Ascending aorta (tissue), 2 donors: ENCODE measurements at regions of chr7 and their contacts with region 1.

Region 1: DNA sequence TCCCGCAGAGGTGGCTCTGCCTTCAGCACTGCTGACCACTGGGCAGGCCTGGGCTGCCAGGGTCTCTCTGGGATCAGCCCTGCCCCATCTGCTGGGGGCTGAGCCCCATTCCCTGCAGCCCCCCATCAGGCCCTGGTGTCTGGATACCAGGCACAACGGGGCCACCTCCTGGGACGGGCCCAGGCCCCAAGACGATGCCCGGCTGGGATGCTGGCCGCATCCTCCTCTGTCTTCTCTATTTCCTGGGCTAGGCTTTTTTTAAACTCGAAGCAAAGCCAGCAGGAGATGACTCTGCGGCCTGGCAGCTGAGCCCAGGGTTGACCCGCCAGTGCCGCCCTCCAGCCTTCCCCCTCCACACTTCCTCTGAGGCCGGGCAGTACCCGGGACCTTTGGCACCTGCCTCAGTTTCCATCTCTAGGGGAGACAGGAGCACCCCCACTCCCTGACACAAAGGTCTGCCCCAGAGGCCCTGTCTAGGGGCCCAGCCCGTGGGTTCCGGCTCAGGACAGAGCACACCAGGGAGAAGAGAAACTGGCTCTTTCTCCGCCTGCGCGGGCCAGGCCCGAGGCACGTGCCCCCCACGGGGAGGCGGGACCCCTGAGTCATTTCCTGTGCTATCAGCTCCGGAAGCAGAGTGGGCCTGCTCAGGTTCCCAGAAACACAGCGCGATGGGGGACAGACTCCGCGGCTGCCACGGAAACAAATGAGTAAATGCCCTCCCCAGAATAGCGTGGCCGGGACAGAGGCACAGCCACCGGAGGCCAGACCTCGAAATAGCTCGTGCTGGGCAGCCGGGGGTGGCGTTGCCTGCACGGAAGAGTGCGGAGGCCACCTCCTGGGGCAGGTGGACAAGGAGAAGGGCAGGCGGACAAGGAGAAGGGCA is 84.6 kb upstream of the PDGFA start:
- DNase-seq: peak; percentile 94 to 98
- H3K4me3 ChIP-seq: peak overlapping the region in 1 of 2 donors; percentile 34
- H3K27ac ChIP-seq: peak overlapping the region; percentile 98 to 99
- H3K4me1 ChIP-seq: peaks cover 20 to 60% of the 10 kb centered on the region in 2 donors
- H3K27me3 ChIP-seq: no peaks in the 10 kb centered on the region
- CTCF ChIP-seq: peak in 2 of 3 experiments; percentile 26 to 62

Region 2: GRCh38 chr7:234655-235578 is 369.3 kb before region 1 on chr7:
- intact Hi-C with region 1: loop called (anchors 5 kb)
- DNase-seq: peak in 1 of 2 donors; percentile 83
- H3K4me3 ChIP-seq: peak overlapping the region in 1 of 2 donors; percentile 56
- H3K27ac ChIP-seq: peak overlapping the region; percentile 92 to 95
- H3K4me1 ChIP-seq: peaks cover 34 to 55% of the 10 kb centered on the region in 2 donors
- H3K27me3 ChIP-seq: no peaks in the 10 kb centered on the region
- CTCF ChIP-seq: no peak

Region 3: DNA sequence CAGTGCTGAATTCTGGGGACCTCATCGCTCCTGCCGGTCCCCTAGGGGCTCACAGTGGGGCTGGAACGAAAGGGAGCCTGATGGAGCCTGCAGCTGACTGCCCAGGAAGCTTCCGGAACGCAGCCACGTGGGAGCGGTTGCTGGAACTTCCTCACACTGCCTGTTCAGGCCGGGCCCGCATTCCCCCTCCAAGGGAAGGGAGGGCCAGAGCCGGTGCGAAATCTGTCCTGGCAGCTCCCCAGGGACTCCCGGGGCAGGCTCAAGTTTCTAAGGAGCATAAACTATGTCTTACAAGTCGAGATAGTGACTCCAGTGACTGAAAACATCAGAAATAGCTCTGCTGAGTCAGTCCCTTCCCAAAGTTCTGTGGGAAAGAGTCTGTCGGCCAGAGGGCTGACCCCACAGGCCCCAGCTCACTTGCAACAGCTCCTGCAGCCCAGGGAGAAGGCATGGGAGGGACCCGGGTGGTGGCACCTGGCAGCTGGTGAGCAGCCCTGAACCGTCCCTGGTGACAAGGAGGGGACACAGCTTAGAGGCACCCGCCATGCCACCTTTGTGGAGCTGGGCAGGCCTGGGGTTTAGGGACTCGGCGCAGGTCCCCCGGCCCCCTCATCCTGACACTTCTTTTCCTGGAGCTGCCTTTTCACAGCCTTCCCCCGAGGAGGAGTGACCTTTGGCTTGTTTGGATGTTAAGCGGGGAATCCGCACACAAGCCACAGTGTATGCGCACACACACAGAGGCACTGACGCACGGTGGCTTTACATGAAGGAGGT is 132.2 kb before region 1 on chr7:
- intact Hi-C with region 1: loop called (anchors 5 kb)
- DNase-seq: peak; percentile 88 to 97
- H3K4me3 ChIP-seq: peak overlapping the region in 1 of 2 donors; percentile 21
- H3K27ac ChIP-seq: peak overlapping the region; percentile 85
- H3K4me1 ChIP-seq: peaks cover 8 to 17% of the 10 kb centered on the region in 2 donors
- H3K27me3 ChIP-seq: no peaks in the 10 kb centered on the region
- CTCF ChIP-seq: no peak

Region 4: DNA sequence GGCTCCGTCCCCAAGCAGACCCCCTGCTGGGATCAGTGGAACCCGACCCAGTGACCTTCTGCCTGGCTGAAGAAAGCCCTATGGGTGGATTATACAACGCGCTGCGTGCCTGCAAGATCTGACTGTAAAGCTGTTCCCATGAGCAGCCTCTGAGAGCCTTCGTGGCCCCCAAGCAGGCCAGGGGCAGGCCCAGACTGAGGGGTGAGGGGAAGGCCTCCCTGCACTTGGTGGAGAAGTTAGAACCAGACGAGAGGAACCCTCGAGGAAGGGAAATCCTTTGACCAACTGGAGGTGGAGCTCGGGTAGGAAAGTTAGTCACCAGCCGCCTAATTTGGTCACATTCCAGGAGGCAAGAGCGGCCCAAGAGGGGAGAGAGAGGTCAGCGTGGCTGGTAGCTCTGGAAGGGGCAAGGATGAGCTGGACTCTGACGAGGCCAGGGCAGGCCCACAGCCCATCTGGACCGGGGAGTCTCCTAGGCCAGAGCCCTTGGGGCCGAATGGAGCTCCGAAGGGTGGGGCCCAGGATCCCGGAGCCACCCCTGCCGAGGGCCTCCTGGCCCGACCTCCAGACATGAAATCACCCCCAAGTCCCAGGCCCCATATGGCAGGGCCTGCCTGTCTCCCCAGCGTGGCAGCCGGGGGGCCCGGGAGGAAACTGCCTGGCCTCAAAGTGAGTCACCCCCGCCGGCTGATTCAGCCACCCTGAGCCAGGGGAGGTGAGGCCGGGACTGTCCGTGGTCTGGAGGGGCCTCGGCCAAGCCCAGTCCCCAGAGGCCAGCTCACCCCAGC is 61.3 kb before region 1 on chr7:
- intact Hi-C with region 1: loop called (anchors 1 kb)
- DNase-seq: peak; percentile 55 to 92
- H3K4me3 ChIP-seq: no peak overlapping the region
- H3K27ac ChIP-seq: peak overlapping the region; percentile 87 to 89
- H3K4me1 ChIP-seq: peaks cover 20 to 30% of the 10 kb centered on the region in 2 donors
- H3K27me3 ChIP-seq: no peaks in the 10 kb centered on the region
- CTCF ChIP-seq: no peak

Region 5: GRCh38 chr7:774161-775109 is 170.2 kb after region 1 on chr7:
- intact Hi-C with region 1: loop called (anchors 10 kb)
- DNase-seq: no peak
- H3K4me3 ChIP-seq: no peak overlapping the region
- H3K27ac ChIP-seq: no peak overlapping the region
- H3K4me1 ChIP-seq: peaks cover 6 to 20% of the 10 kb centered on the region in 2 donors
- H3K27me3 ChIP-seq: no peaks in the 10 kb centered on the region
- CTCF ChIP-seq: peak; percentile 90 to 96 (median 94)

Region 6: GRCh38 chr7:1532483-1533424 is 928.5 kb after region 1 on chr7:
- intact Hi-C with region 1: loop called (anchors 10 kb)
- DNase-seq: peak; percentile 88 to 96
- H3K4me3 ChIP-seq: peak overlapping the region; percentile 76 to 91
- H3K27ac ChIP-seq: peak overlapping the region; percentile 98 to 99
- H3K4me1 ChIP-seq: peaks cover 9 to 40% of the 10 kb centered on the region in 2 donors
- H3K27me3 ChIP-seq: no peaks in the 10 kb centered on the region
- CTCF ChIP-seq: no peak